Posterior vena cava (tissue), 2 donors: ENCODE measurements at regions of chr1 and their contacts with region 1.

Region 1: GRCh38 chr1:107277022-107277421 is 136.2 kb downstream of the NTNG1 start:
- DNase-seq: no peak

Region 2: GRCh38 chr1:106063510-106063909 is 1213.5 kb before region 1 on chr1:
- intact Hi-C with region 1: no loop called
- DNase-seq: no peak

Region 3: DNA sequence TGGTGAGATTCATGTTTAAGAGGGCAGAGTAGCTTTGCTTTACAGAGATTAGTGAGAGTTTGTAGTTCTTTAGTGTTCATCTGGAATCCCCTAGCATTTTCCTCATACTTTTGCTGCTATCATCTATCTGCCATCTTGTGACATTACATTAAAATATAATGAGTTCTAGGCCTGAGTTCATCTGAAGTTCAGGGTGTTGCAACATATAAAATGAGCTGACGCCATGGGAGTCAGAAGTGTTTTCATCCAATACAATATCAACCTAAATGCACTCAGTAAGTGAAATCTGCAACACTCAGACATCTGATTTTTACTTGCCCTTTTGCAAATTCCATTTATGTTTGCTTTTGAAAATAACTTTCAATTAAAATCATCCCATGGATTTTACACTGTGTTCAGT is 17.7 kb after region 1 on chr1:
- intact Hi-C with region 1: loop called in 1 of 2 experiments (anchors 1 kb)
- DNase-seq: no peak

Region 4: DNA sequence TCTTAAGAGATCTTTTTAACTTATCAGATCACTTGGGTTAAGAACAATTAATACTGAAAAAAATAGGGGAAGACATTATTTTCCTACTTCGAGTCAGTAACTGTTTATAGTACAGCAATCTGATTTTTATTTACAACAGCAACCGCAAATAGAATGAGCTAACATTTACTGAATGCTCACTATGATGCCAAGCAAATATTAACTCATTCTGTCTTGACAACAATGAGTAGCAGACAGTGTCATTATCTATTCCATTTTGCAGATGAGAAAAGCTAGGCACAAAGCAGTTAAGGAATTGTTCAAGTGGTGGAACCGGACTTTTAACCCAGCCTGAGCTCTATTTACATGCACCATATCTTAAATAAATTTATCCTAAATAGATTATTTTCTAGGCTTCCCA is 137.5 kb after region 1 on chr1:
- intact Hi-C with region 1: no loop called
- DNase-seq: no peak

Region 5: DNA sequence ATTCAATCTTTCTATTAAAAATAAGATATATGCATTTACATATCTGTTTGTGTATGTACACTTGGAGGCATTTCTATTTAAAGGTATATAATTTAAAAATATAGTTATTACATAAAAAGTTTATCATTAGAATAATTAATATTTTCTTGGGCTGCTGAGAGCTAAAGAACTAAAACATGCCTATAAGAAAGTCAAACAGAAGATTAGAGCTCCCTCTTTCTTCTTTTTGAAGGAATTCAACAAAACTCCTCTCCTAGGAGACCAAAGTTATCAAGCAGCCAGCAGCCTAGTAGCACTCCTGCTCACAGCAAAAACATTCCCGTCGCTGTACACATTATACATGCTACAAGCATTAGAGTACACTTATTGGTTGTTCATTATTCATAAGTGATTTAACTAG is 471.5 kb after region 1 on chr1:
- intact Hi-C with region 1: loop called in 1 of 2 experiments (anchors 10 kb)
- DNase-seq: no peak